Heart left ventricle (tissue), 16 donors: ENCODE measurements at regions of chr1 and their contacts with region 1.

Region 1: GRCh38 chr1:48697066-48697707 is 79.5 kb downstream of the BEND5 start:
- DNase-seq: peak in 4 of 5 donors; percentile 29 to 68 (median 31)
- ATAC-seq: peak in 1 of 4 donors; percentile 35
- H3K4me3 ChIP-seq: no peak overlapping the region
- H3K27ac ChIP-seq: no peak overlapping the region
- H3K4me1 ChIP-seq: no peaks in the 10 kb centered on the region
- H3K27me3 ChIP-seq: peaks cover 0 to 42% (median under 1%) of the 10 kb centered on the region in 9 donors
- CTCF ChIP-seq: peak; percentile 77 to 91 (median 89)
- POLR2A ChIP-seq: no peak

Region 2: GRCh38 chr1:48617227-48617626 is 80.0 kb before region 1 on chr1:
- intact Hi-C with region 1: no loop called
- DNase-seq: no peak
- ATAC-seq: peak in 1 of 4 donors; percentile 20
- H3K4me3 ChIP-seq: no peak overlapping the region
- H3K27ac ChIP-seq: no peak overlapping the region
- H3K4me1 ChIP-seq: peaks cover 0 to 11% (median 0%) of the 10 kb centered on the region in 12 donors
- H3K27me3 ChIP-seq: peaks cover 0 to 10% (median 0%) of the 10 kb centered on the region in 9 donors
- CTCF ChIP-seq: no peak
- POLR2A ChIP-seq: no peak

Region 3: DNA sequence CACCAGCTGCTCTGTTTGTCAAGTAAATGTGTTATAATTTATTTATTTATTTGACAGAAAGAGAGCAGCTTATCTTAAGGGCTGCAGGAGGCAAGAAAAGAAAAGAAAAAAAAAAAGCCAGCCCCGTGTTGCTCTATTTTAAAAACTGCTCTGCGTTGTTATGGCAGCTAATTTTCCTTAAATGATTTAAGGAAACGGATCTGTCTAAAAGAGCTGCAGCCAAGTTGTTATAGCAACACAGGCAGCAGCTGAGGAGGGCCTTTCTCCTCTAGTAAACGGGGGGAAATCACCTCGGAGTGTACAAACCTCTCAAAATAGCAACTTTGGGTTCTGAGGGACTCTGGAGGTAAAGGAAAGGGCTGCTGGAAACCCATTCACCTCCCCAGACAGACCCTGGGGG is 69.7 kb before region 1 on chr1:
- intact Hi-C with region 1: no loop called
- DNase-seq: no peak
- ATAC-seq: no peak
- H3K4me3 ChIP-seq: no peak overlapping the region
- H3K27ac ChIP-seq: no peak overlapping the region
- H3K4me1 ChIP-seq: no peaks in the 10 kb centered on the region
- H3K27me3 ChIP-seq: no peaks in the 10 kb centered on the region
- CTCF ChIP-seq: no peak
- POLR2A ChIP-seq: no peak

Region 4: GRCh38 chr1:48644905-48645605 is 52.1 kb before region 1 on chr1:
- intact Hi-C with region 1: no loop called
- DNase-seq: no peak
- ATAC-seq: no peak
- H3K4me3 ChIP-seq: no peak overlapping the region
- H3K27ac ChIP-seq: no peak overlapping the region
- H3K4me1 ChIP-seq: no peaks in the 10 kb centered on the region
- H3K27me3 ChIP-seq: peaks cover 0 to 14% (median 0%) of the 10 kb centered on the region in 9 donors
- CTCF ChIP-seq: no peak
- POLR2A ChIP-seq: no peak

Region 5: DNA sequence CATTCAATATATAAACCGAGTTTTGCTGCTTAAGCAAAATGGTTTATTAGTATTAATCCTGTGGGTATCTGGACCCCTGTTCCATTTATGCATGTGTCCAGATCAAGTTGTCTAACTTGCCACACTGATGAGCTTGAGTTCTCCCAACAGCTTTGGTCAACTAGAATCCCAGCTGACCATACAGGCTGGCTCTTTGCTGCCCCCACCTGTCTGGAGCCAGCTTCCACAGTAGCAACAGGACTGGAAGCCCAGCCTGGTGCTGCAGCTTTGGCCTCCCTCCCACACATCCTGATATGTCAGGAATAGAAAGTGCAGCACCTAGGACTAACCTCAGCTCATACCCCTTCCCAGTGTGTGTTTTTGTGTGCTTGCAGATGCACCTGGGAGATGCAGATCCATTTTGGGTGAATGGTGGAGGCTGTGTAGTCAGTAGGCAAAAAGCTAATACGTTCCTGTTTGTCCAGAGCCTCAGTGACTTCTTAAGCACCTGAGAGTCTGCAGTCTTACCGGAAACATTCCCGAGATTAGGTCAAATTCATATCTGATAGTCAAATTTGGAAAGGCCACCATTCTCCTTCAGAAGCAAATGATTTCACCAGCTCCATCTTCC is 120.4 kb after region 1 on chr1:
- intact Hi-C with region 1: loop called in 1 of 10 experiments (anchors 10 kb)
- DNase-seq: peak; percentile 32 to 66 (median 54)
- ATAC-seq: peak in 3 of 4 donors; percentile 79 to 82 (median 80)
- H3K4me3 ChIP-seq: no peak overlapping the region
- H3K27ac ChIP-seq: no peak overlapping the region
- H3K4me1 ChIP-seq: no peaks in the 10 kb centered on the region
- H3K27me3 ChIP-seq: no peaks in the 10 kb centered on the region
- CTCF ChIP-seq: peak; percentile 45 to 75 (median 68)
- POLR2A ChIP-seq: no peak